Activated T-helper 2 cell treated with anti-CD3 and anti-CD28 coated beads, Interferon-gamma antibody, Interleukin-2, Interleukin-4, amounts not matched to agents 10 μg/mL and 5 μg/mL and 100 μg/mL, durations not matched to agents 14 hours and 24 hours and 36 hours (primary cell): ENCODE measurements at regions of chr2 and their contacts with region 1.

Region 1: GRCh38 chr2:74482801-74483674 is at the starts of genes CCDC142 and TTC31:
- DNase-seq: peak; percentile 91
- H3K4me3 Mint-ChIP-seq: peak within 1 kb of the TSS; percentile 99
- H3K27ac Mint-ChIP-seq: peak within 1 kb of the TSS; percentile 99
- H3K4me1 Mint-ChIP-seq: peaks cover 26% of the 10 kb centered on the region
- H3K27me3 Mint-ChIP-seq: no peaks in the 10 kb centered on the region
- total RNA-seq, gene CCDC142: 25.1 and 26.9 TPM in 2 replicates
- total RNA-seq, gene TTC31: 35.1 and 35.9 TPM in 2 replicates

Region 2: DNA sequence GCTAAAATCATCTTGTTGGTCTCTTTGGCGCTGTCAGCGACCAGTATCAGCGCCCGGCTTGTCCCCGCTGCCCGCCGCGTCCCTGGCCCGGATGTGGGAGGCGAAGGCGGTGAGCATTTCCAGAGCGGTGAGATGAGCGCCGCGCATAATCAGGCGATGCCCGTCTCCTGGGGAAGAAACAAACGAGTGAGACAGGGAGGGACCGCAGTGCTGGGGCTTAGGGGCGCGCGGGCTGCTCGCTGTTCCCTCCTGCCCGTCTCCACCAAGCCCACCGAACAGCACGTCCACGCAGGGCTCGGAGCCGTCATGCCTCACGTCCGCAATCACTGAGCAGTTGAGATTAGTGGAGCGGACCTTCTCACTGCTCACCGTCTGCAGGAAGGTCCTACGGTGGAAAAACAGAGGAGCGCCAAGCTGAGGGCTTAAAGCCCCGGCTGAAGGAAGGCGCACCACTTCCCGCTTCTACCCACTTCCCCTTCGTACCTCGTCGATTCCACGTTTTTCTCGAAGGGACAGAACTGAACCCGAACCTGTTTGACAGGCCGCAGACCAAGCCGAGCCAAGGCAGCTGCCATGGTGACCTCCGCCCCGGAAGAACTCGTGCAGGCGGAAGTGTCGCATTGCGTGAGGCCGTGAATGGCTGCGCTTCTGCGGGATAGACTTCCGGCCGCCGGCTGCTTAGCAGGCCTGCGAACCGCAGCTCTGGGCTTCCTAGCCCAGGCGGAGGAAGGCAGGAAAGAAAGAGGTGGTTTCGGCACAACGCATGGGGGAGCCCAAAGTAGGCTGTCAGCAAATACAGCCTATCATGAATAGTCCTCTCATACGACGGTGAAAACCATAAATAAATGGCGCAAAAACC is 10.7 kb before region 1 on chr2 and contains the start of gene MRPL53:
- intact Hi-C with region 1: loop called (anchors 1 kb)
- DNase-seq: peak; percentile 95
- H3K4me3 Mint-ChIP-seq: peak within 1 kb of the TSS; percentile 97
- H3K27ac Mint-ChIP-seq: peak within 1 kb of the TSS; percentile 98
- H3K4me1 Mint-ChIP-seq: peaks cover 25% of the 10 kb centered on the region
- H3K27me3 Mint-ChIP-seq: no peaks in the 10 kb centered on the region
- total RNA-seq, gene MRPL53: 102 and 110 TPM in 2 replicates